ENCODE measurements at regions of chr16 and their contacts with region 1.

Region 1: GRCh38 chr16:78437352-78437968 is 338.0 kb downstream of the WWOX start:
- DNase-seq: no peak
- ATAC-seq: no peak
- H3K4me3 ChIP-seq: no peak overlapping the region
- H3K27ac ChIP-seq: no peak overlapping the region
- H3K4me1 ChIP-seq: no peaks in the 10 kb centered on the region
- H3K27me3 ChIP-seq: no peaks in the 10 kb centered on the region
- CTCF ChIP-seq: peak; percentile 77

Region 2: DNA sequence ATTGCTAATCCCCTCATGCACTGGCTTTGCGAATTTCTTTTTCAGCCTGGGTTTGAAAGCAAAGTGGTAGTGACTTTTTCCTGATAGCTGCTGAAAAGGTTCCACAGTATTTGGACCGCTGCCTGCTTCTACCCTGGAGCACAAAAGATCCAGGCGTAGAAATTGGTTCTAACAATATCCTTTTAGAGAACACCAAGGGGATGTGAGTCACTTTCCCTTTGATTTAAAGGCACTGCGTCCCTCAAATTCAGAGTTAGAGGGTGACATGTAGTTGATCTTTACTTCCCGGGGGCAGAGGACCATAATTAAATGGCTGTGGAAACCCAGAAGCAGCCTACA is 119.6 kb before region 1 on chr16:
- intact Hi-C with region 1: no loop called
- DNase-seq: no peak
- ATAC-seq: no peak
- H3K4me3 ChIP-seq: no peak overlapping the region
- H3K27ac ChIP-seq: no peak overlapping the region
- H3K4me1 ChIP-seq: no peaks in the 10 kb centered on the region
- H3K27me3 ChIP-seq: no peaks in the 10 kb centered on the region
- CTCF ChIP-seq: no peak

Region 3: DNA sequence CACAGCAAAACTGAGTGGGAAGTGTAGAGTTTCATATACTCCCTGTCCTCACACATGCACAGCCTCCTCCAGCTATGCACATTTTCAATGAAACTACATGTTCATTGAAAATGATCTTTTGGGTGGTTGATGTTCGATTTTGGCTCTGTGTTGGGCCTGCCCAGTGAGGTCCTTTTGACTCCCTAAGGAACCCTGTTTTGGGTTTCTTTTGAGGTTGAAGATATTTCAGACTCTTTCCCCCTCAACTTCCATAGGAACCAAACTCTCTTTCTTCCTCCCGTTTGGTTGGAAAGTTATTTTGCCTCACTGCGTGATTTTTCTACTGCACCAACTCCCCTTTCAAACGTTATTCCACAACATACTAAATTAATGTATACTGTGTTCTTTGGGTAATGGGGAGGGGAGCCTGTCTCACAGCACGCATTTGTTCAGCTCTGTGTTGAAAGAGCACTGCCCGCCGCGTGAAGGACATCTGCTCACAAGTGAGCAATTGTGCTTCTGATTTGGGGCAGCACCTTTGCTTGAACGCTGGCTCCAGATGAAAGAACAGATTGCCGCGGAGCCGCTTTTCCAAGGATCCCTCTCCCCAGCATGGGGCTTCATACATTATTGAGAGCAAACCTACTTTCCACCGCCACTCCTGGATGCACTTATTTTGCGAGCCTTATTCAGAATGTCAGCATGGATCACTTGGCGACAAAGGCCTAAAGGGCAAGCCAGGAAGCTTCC is 47.9 kb after region 1 on chr16:
- intact Hi-C with region 1: loop called in 1 of 2 experiments (anchors 5 kb)
- DNase-seq: no peak
- ATAC-seq: no peak
- H3K4me3 ChIP-seq: no peak overlapping the region
- H3K27ac ChIP-seq: no peak overlapping the region
- H3K4me1 ChIP-seq: no peaks in the 10 kb centered on the region
- H3K27me3 ChIP-seq: no peaks in the 10 kb centered on the region
- CTCF ChIP-seq: no peak

Measured in psoas muscle (tissue), 8 donors.